ENCODE measurements at regions of chr2 and their contacts with region 1.

Region 1: GRCh38 chr2:218568190-218569037 is at the starts of genes CNOT9 and USP37:
- DNase-seq: peak; percentile 100
- H3K4me3 Mint-ChIP-seq: peak within 1 kb of the TSS; percentile 94
- H3K27ac Mint-ChIP-seq: peak within 1 kb of the TSS; percentile 99
- H3K4me1 Mint-ChIP-seq: peaks cover 59% of the 10 kb centered on the region
- H3K27me3 Mint-ChIP-seq: peaks cover 3% of the 10 kb centered on the region
- total RNA-seq, gene CNOT9: 138 TPM in 2 replicates
- total RNA-seq, gene USP37: 43.5 and 50.4 TPM in 2 replicates

Region 2: GRCh38 chr2:218301176-218301819 is 267.1 kb before region 1 on chr2:
- intact Hi-C with region 1: loop called (anchors 1 kb)
- DNase-seq: peak; percentile 83
- H3K4me3 Mint-ChIP-seq: no peak overlapping the region
- H3K27ac Mint-ChIP-seq: no peak overlapping the region
- H3K4me1 Mint-ChIP-seq: peaks cover 5% of the 10 kb centered on the region
- H3K27me3 Mint-ChIP-seq: peaks cover 2% of the 10 kb centered on the region

Region 3: GRCh38 chr2:218659258-218659987 is 91.0 kb after region 1 on chr2 and contains the starts of genes BCS1L and ZNF142:
- intact Hi-C with region 1: loop called (anchors 1 kb)
- DNase-seq: peak; percentile 92
- H3K4me3 Mint-ChIP-seq: peak within 1 kb of the TSS; percentile 99
- H3K27ac Mint-ChIP-seq: peak within 1 kb of the TSS; percentile 97
- H3K4me1 Mint-ChIP-seq: peaks cover 29% of the 10 kb centered on the region
- H3K27me3 Mint-ChIP-seq: no peaks in the 10 kb centered on the region
- total RNA-seq, gene BCS1L: 85.1 and 85.3 TPM in 2 replicates
- total RNA-seq, gene ZNF142: 61.8 and 64.4 TPM in 2 replicates

Region 4: GRCh38 chr2:218717262-218717661 is 148.8 kb after region 1 on chr2:
- intact Hi-C with region 1: no loop called
- DNase-seq: no peak
- H3K4me3 Mint-ChIP-seq: no peak overlapping the region
- H3K27ac Mint-ChIP-seq: no peak overlapping the region
- H3K4me1 Mint-ChIP-seq: peaks cover 22% of the 10 kb centered on the region
- H3K27me3 Mint-ChIP-seq: no peaks in the 10 kb centered on the region

Region 5: DNA sequence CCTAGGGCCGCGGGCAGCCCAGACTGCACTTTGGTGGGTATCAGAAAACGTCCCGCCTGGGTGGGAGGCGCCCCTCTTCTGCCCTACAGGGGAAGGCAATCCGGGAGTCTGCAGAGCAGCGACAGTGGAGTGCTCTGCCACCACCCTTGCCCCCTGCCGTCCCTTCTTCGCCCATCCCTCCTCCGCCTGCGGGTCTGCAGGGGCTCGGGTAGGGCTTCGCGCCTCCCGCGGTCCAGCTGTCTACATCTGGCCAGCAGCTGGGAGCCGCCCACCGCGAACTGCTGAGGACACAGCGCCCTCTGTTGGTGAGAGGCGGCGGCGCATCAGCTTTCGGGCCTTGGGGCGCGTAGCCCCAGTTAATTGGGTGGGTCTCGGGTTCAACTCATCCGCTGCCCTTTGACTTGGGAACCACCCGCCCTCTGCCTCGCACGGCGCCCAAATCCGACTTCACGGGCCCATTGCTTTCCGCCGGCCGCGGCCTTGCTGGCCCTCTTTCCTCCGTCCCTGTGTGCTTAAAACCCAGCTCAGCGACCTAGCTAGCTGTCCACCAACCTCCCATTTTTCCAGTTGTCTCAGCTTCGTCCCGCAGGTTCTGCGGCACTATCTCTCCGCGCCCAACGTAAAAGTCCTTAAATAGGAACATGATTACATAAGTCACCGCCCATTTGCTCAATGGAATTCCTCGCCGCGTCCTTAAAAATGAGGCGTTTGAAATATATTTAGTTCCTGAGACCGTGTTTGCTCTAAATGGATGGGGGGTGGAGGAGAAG is 329.9 kb after region 1 on chr2:
- intact Hi-C with region 1: loop called (anchors 5 kb)
- DNase-seq: peak; percentile 71
- H3K4me3 Mint-ChIP-seq: peak overlapping the region; percentile 73
- H3K27ac Mint-ChIP-seq: peak overlapping the region; percentile 86
- H3K4me1 Mint-ChIP-seq: peaks cover 42% of the 10 kb centered on the region
- H3K27me3 Mint-ChIP-seq: peaks cover 56% of the 10 kb centered on the region

Region 6: GRCh38 chr2:219253753-219254590 is 685.6 kb after region 1 on chr2 and contains the start of gene TUBA4A:
- intact Hi-C with region 1: loop called (anchors 1 kb)
- DNase-seq: peak; percentile 87
- H3K4me3 Mint-ChIP-seq: peak within 1 kb of the TSS; percentile 93
- H3K27ac Mint-ChIP-seq: peak within 1 kb of the TSS; percentile 98
- H3K4me1 Mint-ChIP-seq: peaks cover 50% of the 10 kb centered on the region
- H3K27me3 Mint-ChIP-seq: no peaks in the 10 kb centered on the region
- total RNA-seq, gene TUBA4A: 211 and 217 TPM in 2 replicates

Measured in activated T-helper 1 cell treated with anti-CD3 and anti-CD28 coated beads, Interleukin-12 subunit alpha, Interleukin-12 subunit beta, Interleukin-2, Interleukin-4 antibody, amounts not matched to agents 30 ng/mL and 10 ng/mL and 1 ng/mL, durations not matched to agents 14 hours and 24 hours and 36 hours (primary cell).